ENCODE measurements at regions of chr4 and their contacts with region 1.

Region 1: DNA sequence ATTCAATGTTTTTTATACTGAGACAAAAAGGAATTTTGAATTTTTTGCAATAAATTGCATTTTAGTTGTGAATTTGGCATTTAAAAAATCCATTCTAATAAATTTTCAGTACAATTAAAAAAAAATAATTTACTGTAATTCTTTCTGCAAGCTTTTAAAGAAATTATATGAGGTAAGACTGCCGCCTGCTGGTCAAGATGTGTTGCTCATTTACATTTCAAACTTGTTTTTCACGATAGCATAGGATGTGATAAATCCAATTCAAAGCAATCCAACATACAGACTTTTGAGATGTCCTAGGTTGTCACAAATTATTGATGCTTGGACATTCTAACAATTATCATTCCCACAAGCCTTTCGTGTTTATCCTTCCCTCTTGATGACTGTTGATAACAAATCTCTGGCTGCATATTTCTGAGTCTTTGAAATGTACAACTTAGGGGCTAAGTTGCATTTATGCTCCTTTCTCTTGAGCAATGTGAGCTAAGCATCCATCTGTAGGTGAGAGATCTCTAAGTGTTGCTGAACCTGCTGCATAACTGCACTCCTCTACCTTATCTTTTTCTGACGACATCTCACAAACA is 21.7 kb upstream of the MFAP3L start:
- DNase-seq: peak in 6 of 10 donors; percentile 41 to 78 (median 56)
- H3K4me3 ChIP-seq: no peak overlapping the region
- H3K27ac ChIP-seq: no peak overlapping the region
- H3K27me3 ChIP-seq: no peaks in the 10 kb centered on the region
- CTCF ChIP-seq: peak; percentile 70 to 98 (median 90)

Region 2: DNA sequence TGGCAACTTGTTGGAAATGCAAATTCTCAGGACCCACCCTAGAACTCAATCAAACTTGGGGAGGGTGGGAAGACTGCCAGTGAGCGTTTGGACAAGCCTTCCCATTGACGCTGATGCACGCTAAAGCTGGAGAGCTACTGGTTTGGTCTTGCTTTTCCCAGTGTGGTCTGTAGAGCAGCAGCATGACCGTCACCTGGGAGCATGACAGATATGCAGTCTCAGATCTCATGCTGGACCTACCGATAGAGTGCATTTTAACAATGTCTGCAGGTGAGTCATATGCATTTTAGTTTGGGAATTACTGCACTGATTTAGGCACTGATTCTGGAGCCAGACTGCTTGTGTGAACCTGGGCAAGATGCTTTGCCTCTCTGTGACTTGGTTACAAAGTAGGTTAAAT is 317.3 kb before region 1 on chr4:
- intact Hi-C with region 1: no loop called
- DNase-seq: no peak
- H3K4me3 ChIP-seq: no peak overlapping the region
- H3K27ac ChIP-seq: no peak overlapping the region
- H3K27me3 ChIP-seq: no peaks in the 10 kb centered on the region
- CTCF ChIP-seq: no peak

Region 3: GRCh38 chr4:169810325-169811323 is 237.2 kb before region 1 on chr4:
- intact Hi-C with region 1: loop called (anchors 2 kb)
- DNase-seq: peak in 2 of 10 donors; percentile 24 to 31
- H3K4me3 ChIP-seq: peak overlapping the region in 33 of 59 donors; percentile 2 to 49 (median 24)
- H3K27ac ChIP-seq: peak overlapping the region in 6 of 59 donors; percentile 0 to 62 (median 46)
- H3K27me3 ChIP-seq: no peaks in the 10 kb centered on the region
- CTCF ChIP-seq: peak; percentile 63 to 98 (median 93)

Region 4: GRCh38 chr4:170529748-170530722 is 482.2 kb after region 1 on chr4:
- intact Hi-C with region 1: no loop called
- DNase-seq: no peak
- H3K4me3 ChIP-seq: no peak overlapping the region
- H3K27ac ChIP-seq: no peak overlapping the region
- H3K27me3 ChIP-seq: no peaks in the 10 kb centered on the region
- CTCF ChIP-seq: no peak

Measured in dorsolateral prefrontal cortex (tissue), 120 donors.